Activated CD4-positive, alpha-beta memory T cell treated with anti-CD3 and anti-CD28 coated beads, Interleukin-2, amount 10 ng/mL, durations not matched to agents 7 days and 5 days (primary cell): ENCODE measurements at regions of chr15 and their contacts with region 1.

Region 1: GRCh38 chr15:85646538-85647091 is 148.1 kb downstream of the KLHL25 start:
- DNase-seq: peak; percentile 49
- H3K4me3 Mint-ChIP-seq: peak overlapping the region; percentile 17
- H3K27ac Mint-ChIP-seq: peak overlapping the region; percentile 80
- H3K4me1 Mint-ChIP-seq: peaks cover 53% of the 10 kb centered on the region
- H3K27me3 Mint-ChIP-seq: no peaks in the 10 kb centered on the region

Region 2: GRCh38 chr15:85625856-85626255 is 20.8 kb before region 1 on chr15:
- CTCF ChIA-PET with region 1: interaction called, 14 read pairs
- POLR2A ChIA-PET with region 1: interaction called, 60 read pairs
- DNase-seq: peak; percentile 51
- H3K4me3 Mint-ChIP-seq: peak overlapping the region; percentile 51
- H3K27ac Mint-ChIP-seq: peak overlapping the region; percentile 90
- H3K4me1 Mint-ChIP-seq: peaks cover 74% of the 10 kb centered on the region
- H3K27me3 Mint-ChIP-seq: no peaks in the 10 kb centered on the region

Region 3: GRCh38 chr15:85667491-85668424 is 21.1 kb after region 1 on chr15:
- CTCF ChIA-PET with region 1: interaction called, 3 read pairs
- POLR2A ChIA-PET with region 1: interaction called, 17 read pairs
- DNase-seq: peak; percentile 61
- H3K4me3 Mint-ChIP-seq: peak overlapping the region; percentile 2
- H3K27ac Mint-ChIP-seq: peak overlapping the region; percentile 86
- H3K4me1 Mint-ChIP-seq: peaks cover 22% of the 10 kb centered on the region
- H3K27me3 Mint-ChIP-seq: no peaks in the 10 kb centered on the region